ENCODE measurements at regions of chr17 and their contacts with region 1.

Region 1: DNA sequence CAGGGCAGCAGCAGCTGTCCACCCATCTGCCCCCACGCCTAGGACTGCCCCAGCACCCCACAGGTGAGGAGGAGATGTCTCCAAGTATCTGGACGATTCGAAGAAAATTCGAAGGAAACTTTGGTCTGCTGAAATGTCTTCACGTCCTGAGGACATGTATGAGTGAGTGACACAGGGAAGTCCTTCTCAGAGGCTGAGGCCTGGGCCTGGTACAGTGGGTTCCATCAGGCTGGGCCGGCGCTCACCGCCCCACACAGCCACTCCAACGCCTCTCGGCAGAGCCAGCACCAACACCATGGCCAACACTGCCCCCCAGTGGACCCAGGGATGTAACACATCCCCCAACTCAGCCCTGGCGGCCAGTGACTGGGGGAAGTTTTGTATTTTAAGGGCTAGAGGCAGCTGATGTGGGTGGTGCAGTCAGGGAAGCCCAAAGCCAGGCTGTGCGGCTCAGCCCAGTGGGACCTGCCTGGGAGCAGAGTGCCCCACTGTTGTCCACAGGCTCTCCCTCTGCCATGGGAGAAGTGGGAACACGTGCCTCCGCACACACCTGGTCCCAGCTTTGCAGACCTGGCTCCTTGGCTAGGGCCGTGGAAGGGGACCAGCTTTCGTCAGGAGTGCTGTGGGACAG is 55.8 kb upstream of the FASN start:
- DNase-seq: peak; percentile 81
- H3K4me3 ChIP-seq: no peak overlapping the region
- H3K27ac ChIP-seq: no peak overlapping the region
- H3K4me1 ChIP-seq: no peaks in the 10 kb centered on the region
- H3K27me3 ChIP-seq: no peaks in the 10 kb centered on the region
- CTCF ChIP-seq: peak; percentile 91 to 95 (median 92)
- EP300 ChIP-seq: no peak
- POLR2A ChIP-seq: no peak

Region 2: GRCh38 chr17:81959362-81960129 is 194.3 kb before region 1 on chr17:
- in situ Hi-C with region 1: loop called in 1 of 4 experiments (anchors 25 kb)
- intact Hi-C with region 1: no loop called
- DNase-seq: peak; percentile 82
- H3K4me3 ChIP-seq: peak overlapping the region in 3 of 4 donors; percentile 15 to 49 (median 48)
- H3K27ac ChIP-seq: no peak overlapping the region
- H3K4me1 ChIP-seq: peaks cover 6 to 22% (median 17%) of the 10 kb centered on the region in 4 donors
- H3K27me3 ChIP-seq: peaks cover 80% of the 10 kb centered on the region
- CTCF ChIP-seq: peak in 4 of 5 experiments; percentile 45 to 79 (median 56)
- EP300 ChIP-seq: no peak
- POLR2A ChIP-seq: no peak

Region 3: DNA sequence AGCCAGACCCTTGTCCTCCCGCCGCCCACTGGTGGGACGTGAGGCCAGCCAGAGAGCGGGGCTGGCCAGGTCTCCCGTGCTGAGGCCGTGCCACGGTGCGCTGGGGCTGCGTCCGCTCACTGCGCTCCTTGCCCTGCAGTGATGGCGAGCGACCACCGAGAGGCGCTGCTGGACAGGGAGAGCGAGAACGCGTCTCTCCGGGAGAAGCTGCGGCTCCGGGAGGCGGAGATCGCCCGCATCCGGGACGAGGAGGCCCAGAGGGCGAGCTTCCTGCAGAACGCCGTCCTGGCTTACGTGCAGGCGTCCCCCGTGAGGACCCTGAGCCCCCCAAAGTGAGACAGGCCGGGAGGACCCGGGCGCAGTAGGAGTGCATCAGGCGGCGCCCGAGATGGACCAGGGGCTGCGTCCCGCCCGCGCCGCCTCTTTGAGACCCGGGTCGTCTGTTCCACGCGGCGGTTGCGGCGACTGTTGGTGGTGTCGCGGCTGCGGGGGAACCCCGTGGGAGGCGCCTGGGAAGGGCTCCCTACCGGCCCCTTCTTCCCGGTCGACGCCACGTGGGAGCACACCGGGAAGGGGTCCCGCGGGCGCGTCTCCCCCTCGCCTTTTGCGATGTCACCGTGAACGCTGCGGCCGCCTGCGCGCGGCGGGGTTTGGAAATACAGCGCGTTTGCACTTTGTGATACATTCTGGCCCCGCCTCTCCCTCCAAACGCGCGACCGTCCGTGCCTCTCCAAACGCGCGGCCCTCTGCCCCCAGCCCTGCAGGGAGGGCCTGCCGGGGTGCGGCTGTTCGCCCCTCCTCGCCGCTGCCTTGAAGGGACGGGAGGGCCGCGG is 123.2 kb before region 1 on chr17:
- in situ Hi-C with region 1: loop called (anchors 5 to 25 kb)
- intact Hi-C with region 1: loop called (anchors 1 kb)
- DNase-seq: peak; percentile 91
- H3K4me3 ChIP-seq: peak overlapping the region; percentile 18 to 61 (median 49)
- H3K27ac ChIP-seq: peak overlapping the region; percentile 72 to 90 (median 81)
- H3K4me1 ChIP-seq: peaks cover 4 to 20% (median 17%) of the 10 kb centered on the region in 4 donors
- H3K27me3 ChIP-seq: peaks cover 9% of the 10 kb centered on the region
- CTCF ChIP-seq: peak; percentile 92 to 97 (median 95)
- EP300 ChIP-seq: no peak
- POLR2A ChIP-seq: peak; percentile 46

Region 4: GRCh38 chr17:82037113-82037888 is 116.6 kb before region 1 on chr17 and contains the start of gene DCXR:
- in situ Hi-C with region 1: loop called in 3 of 4 experiments (anchors 10 to 25 kb)
- intact Hi-C with region 1: no loop called
- DNase-seq: peak; percentile 98
- H3K4me3 ChIP-seq: peak within 1 kb of the TSS; percentile 60 to 71 (median 65)
- H3K27ac ChIP-seq: peak within 1 kb of the TSS; percentile 90 to 99 (median 96)
- H3K4me1 ChIP-seq: peaks cover 8 to 18% (median 15%) of the 10 kb centered on the region in 4 donors
- H3K27me3 ChIP-seq: peaks cover 4% of the 10 kb centered on the region
- CTCF ChIP-seq: peak; percentile 59 to 91 (median 79)
- EP300 ChIP-seq: no peak
- POLR2A ChIP-seq: peak; percentile 93
- total RNA-seq, gene DCXR: 49.4 to 117 (median 71.3) TPM

Region 5: DNA sequence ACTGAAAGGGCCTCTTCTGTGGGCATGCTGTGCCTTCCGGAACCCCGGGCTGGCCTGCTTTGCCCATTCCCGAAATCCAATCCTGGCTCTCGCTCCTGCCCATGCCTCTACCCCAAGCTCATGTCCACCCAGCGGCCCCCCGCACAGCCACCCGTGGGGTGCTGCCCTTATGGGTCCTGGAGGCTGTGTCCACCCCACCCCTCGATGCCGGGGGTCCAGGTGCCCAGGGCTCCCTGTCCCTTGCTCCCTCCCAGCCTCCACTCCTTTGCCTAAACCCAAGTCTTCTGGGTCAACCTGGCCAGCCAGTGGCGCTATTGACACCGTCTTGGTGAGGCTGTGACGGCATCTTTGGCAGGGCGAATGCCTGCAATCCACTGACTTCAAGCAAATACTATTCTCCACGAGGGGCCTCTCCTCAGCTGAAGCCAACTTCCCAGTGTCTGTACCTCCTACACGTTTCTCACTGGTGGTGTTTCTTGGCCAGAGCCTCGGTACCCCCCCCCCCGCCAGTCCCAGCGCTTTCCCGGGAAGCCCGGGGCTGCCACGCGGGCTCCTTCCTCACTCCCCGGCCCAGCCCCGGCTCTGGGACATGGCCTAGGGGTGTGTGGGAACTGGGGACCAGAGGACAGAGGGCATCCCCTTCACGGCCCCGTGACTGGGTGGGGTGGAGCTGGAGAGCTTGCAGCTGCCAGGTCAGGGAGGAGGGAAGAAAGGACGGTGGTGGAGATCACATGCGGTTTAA is 76.1 kb before region 1 on chr17:
- in situ Hi-C with region 1: no loop called
- intact Hi-C with region 1: no loop called
- DNase-seq: no peak
- H3K4me3 ChIP-seq: no peak overlapping the region
- H3K27ac ChIP-seq: no peak overlapping the region
- H3K4me1 ChIP-seq: peaks cover 0 to 6% (median 0%) of the 10 kb centered on the region in 4 donors
- H3K27me3 ChIP-seq: no peaks in the 10 kb centered on the region
- CTCF ChIP-seq: no peak
- EP300 ChIP-seq: no peak
- POLR2A ChIP-seq: no peak

Region 6: DNA sequence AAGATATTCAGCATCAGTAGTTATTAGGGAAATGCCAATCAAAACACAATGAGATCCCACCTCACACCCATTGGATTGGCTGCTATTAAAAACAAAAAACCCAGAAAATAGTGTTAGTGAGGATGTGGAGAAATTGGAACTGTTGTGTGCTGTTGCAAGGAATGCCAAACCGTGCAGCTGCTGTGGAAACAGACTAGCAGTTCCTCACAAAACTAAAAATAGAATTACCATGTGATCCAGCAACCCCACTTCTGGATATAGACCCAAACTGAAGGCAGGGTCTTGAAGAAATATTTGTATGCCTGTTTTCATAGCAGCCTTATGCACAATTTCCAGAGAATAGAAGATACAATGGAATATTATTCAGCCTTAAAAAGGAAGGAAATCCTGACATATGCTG is 411.7 kb after region 1 on chr17:
- in situ Hi-C with region 1: no loop called
- intact Hi-C with region 1: no loop called
- DNase-seq: no peak
- H3K4me3 ChIP-seq: no peak overlapping the region
- H3K27ac ChIP-seq: peak overlapping the region in 2 of 4 donors; percentile 86 to 90
- H3K4me1 ChIP-seq: peaks cover 17 to 77% (median 46%) of the 10 kb centered on the region in 4 donors
- H3K27me3 ChIP-seq: no peaks in the 10 kb centered on the region
- CTCF ChIP-seq: no peak
- EP300 ChIP-seq: no peak
- POLR2A ChIP-seq: no peak

Measured in transverse colon (tissue), 4 donors.